HEK293 (cell line): ENCODE measurements at regions of chr1 and their contacts with region 1.

Region 1: DNA sequence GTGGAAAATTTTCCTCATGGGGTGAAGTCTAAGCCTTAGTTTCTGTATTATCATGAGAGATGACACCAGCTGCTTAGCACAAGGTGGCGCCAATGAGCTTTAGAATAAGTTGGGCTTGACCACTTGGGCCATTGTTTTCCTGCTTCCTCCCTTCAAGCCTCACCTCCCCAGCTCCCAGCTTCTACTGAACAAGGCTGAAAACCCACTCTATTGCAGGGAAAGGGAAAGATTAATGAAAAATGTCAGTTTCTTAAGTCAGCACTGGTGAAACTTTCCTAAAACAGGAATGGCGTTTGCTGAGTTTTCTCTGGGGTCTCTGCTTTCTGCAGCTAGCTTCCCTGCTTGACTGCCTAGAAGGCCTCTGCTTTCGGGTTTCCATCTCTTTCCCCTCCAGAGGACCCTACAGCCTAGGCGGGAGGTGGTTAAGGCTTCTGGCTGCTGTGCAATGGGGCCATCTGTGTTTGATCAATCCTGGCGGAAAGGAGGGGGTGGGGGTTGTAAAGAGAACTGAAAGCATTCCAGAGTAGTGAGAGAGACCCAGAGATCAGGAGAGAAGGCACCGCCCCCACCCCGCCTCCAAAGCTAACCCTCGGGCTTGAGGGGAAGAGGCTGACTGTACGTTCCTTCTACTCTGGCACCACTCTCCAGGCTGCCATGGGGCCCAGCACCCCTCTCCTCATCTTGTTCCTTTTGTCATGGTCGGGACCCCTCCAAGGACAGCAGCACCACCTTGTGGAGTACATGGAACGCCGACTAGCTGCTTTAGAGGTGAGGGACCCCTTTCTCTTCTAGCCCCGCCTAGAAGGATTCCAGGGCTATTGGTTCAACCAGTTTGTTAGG is at the start of gene OLFML3:
- H3K4me3 ChIP-seq: no peak within 1 kb of the TSS
- H3K27ac ChIP-seq: no peak within 1 kb of the TSS; the same call in 1 of the 2 replicates
- H3K4me1 ChIP-seq: peaks cover 5% of the 10 kb centered on the region; the same call in 1 of the 2 replicates
- CTCF ChIP-seq: peak; percentile 72

Region 2: GRCh38 chr1:113904674-113905434 is 74.2 kb before region 1 on chr1 and contains the starts of genes AP4B1 and DCLRE1B:
- CTCF ChIA-PET with region 1: no interaction called
- POLR2A ChIA-PET with region 1: no interaction called
- H3K4me3 ChIP-seq: peak within 1 kb of the TSS; percentile 69
- H3K27ac ChIP-seq: peak within 1 kb of the TSS; percentile 75
- H3K4me1 ChIP-seq: no peaks in the 10 kb centered on the region
- CTCF ChIP-seq: peak; percentile 99

Region 3: GRCh38 chr1:113990530-113990929 is 11.4 kb after region 1 on chr1:
- CTCF ChIA-PET with region 1: interaction called, 10 read pairs
- POLR2A ChIA-PET with region 1: no interaction called
- H3K4me3 ChIP-seq: no peak overlapping the region
- H3K27ac ChIP-seq: 0 out of 2 replicates have a peak overlapping the region, but pooled peaks have one; percentile 49
- H3K4me1 ChIP-seq: peaks cover 5% of the 10 kb centered on the region; the same call in 1 of the 2 replicates
- CTCF ChIP-seq: no peak

Region 4: DNA sequence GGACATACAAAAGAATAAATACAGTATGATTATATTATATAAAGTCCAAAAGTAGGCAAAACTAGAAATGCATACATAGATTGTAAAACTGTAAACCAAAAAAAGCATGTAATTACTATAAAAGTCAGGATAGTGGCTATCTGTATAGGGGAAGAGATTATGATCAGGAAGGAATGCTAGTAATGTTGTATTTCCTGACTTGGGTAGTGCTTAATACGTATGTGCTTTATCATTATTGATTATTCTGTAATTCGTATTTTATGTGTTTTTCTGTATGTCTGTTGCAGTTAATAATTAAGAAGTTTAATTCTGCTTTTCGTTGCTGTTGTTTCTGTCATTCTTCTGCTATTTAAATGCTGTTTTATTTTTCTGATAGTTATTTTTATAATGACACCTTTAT is 561.1 kb after region 1 on chr1:
- CTCF ChIA-PET with region 1: no interaction called
- POLR2A ChIA-PET with region 1: no interaction called
- H3K4me3 ChIP-seq: no peak overlapping the region
- H3K27ac ChIP-seq: no peak overlapping the region
- H3K4me1 ChIP-seq: no peaks in the 10 kb centered on the region
- CTCF ChIP-seq: no peak